Calu3 (cell line): ENCODE measurements at regions of chr5 and their contacts with region 1.

Region 1: GRCh38 chr5:923281-923873 is 30.7 kb downstream of the TRIP13 start:
- DNase-seq: peak; percentile 79
- H3K4me3 Mint-ChIP-seq: no peak overlapping the region
- H3K27ac Mint-ChIP-seq: no peak overlapping the region
- H3K4me1 Mint-ChIP-seq: no peaks in the 10 kb centered on the region
- H3K27me3 Mint-ChIP-seq: no peaks in the 10 kb centered on the region
- CTCF ChIP-seq: peak; percentile 57

Region 2: GRCh38 chr5:1011226-1011631 is 87.9 kb after region 1 on chr5:
- CTCF ChIA-PET with region 1: interaction called, 4 read pairs
- intact Hi-C with region 1: loop called (anchors 1 kb)
- DNase-seq: peak; percentile 79
- H3K4me3 Mint-ChIP-seq: no peak overlapping the region
- H3K27ac Mint-ChIP-seq: no peak overlapping the region
- H3K4me1 Mint-ChIP-seq: peaks cover 17% of the 10 kb centered on the region
- H3K27me3 Mint-ChIP-seq: peaks cover 72% of the 10 kb centered on the region
- CTCF ChIP-seq: peak; percentile 54

Region 3: GRCh38 chr5:1167728-1168709 is 244.6 kb after region 1 on chr5:
- CTCF ChIA-PET with region 1: interaction called, 9 read pairs
- intact Hi-C with region 1: loop called (anchors 1 kb)
- DNase-seq: peak; percentile 84
- H3K4me3 Mint-ChIP-seq: peak overlapping the region; percentile 70
- H3K27ac Mint-ChIP-seq: peak overlapping the region; percentile 20
- H3K4me1 Mint-ChIP-seq: peaks cover 21% of the 10 kb centered on the region
- H3K27me3 Mint-ChIP-seq: peaks cover 48% of the 10 kb centered on the region
- CTCF ChIP-seq: peak; percentile 84

Region 4: GRCh38 chr5:1523771-1524480 is 600.5 kb after region 1 on chr5 and contains the start of gene LPCAT1:
- CTCF ChIA-PET with region 1: no interaction called
- intact Hi-C with region 1: no loop called
- DNase-seq: peak; percentile 84
- H3K4me3 Mint-ChIP-seq: peak within 1 kb of the TSS; percentile 64
- H3K27ac Mint-ChIP-seq: peak within 1 kb of the TSS; percentile 19
- H3K4me1 Mint-ChIP-seq: peaks cover 12% of the 10 kb centered on the region
- H3K27me3 Mint-ChIP-seq: peaks cover 15% of the 10 kb centered on the region
- CTCF ChIP-seq: peak; percentile 15
- total RNA-seq, gene LPCAT1: 42.3 and 43.8 TPM in 2 replicates